Activated CD8-positive, alpha-beta T cell treated with anti-CD3 and anti-CD28 coated beads for 36 hours (primary cell): ENCODE measurements at regions of chr2 and their contacts with region 1.

Region 1: GRCh38 chr2:69643602-69644505 is at the start of gene AAK1:
- DNase-seq: peak; percentile 91
- ATAC-seq: peak; percentile 58
- H3K4me3 Mint-ChIP-seq: peak within 1 kb of the TSS; percentile 85
- H3K27ac Mint-ChIP-seq: peak within 1 kb of the TSS; percentile 96
- H3K4me1 Mint-ChIP-seq: peaks cover 50% of the 10 kb centered on the region
- H3K27me3 Mint-ChIP-seq: no peaks in the 10 kb centered on the region
- CTCF ChIP-seq: no peak
- total RNA-seq, gene AAK1: 114 to 115 TPM

Region 2: GRCh38 chr2:69253033-69253535 is 390.8 kb before region 1 on chr2:
- CTCF ChIA-PET with region 1: no interaction called
- POLR2A ChIA-PET with region 1: no interaction called
- intact Hi-C with region 1: no loop called
- DNase-seq: no peak
- ATAC-seq: no peak
- H3K4me3 Mint-ChIP-seq: no peak overlapping the region
- H3K27ac Mint-ChIP-seq: no peak overlapping the region
- H3K4me1 Mint-ChIP-seq: no peaks in the 10 kb centered on the region
- H3K27me3 Mint-ChIP-seq: peaks cover 28% of the 10 kb centered on the region
- CTCF ChIP-seq: no peak

Region 3: DNA sequence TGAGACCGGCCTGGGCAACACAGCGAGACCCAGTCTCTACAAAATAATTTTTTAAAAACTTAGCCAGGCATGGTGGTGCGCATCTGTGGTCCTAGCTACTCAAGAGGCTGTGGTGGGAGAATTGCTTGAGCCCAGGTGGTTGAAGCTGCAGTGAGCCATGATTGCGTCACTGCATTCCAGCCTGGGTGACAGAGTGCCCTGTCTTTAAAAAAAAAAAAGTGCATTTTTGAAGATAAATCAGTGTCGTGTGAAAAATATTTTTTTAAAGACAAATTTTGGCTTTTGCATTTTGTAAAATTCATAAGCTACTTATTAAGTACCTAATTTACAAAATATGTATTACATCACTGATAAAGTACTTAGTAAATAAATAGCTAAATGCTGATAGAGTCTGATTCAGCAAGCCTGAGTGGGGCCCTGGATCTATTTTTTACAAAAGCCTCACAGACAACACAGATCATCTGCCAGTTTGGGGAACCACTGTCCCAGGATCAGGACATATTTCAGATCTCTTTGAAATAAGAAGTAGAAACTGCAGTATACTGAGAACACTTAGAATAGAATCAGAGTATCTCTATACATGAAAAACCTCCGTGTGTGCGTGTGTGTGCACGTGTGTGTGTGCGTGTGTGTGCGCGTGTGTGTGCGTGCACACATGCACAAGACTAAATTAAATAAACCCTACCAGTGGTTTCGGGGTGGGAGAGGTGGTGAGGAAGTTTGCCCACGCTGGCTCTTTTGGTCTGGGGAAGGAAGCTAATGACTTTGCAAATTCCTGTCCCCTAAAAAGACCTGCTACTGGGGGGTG is 61.9 kb before region 1 on chr2:
- CTCF ChIA-PET with region 1: interaction called, 4 read pairs
- POLR2A ChIA-PET with region 1: interaction called, 5 read pairs
- intact Hi-C with region 1: loop called (anchors 5 kb)
- DNase-seq: peak; percentile 55
- ATAC-seq: peak; percentile 24
- H3K4me3 Mint-ChIP-seq: peak overlapping the region; percentile 66
- H3K27ac Mint-ChIP-seq: peak overlapping the region; percentile 88
- H3K4me1 Mint-ChIP-seq: peaks cover 89% of the 10 kb centered on the region
- H3K27me3 Mint-ChIP-seq: no peaks in the 10 kb centered on the region
- CTCF ChIP-seq: no peak

Region 4: DNA sequence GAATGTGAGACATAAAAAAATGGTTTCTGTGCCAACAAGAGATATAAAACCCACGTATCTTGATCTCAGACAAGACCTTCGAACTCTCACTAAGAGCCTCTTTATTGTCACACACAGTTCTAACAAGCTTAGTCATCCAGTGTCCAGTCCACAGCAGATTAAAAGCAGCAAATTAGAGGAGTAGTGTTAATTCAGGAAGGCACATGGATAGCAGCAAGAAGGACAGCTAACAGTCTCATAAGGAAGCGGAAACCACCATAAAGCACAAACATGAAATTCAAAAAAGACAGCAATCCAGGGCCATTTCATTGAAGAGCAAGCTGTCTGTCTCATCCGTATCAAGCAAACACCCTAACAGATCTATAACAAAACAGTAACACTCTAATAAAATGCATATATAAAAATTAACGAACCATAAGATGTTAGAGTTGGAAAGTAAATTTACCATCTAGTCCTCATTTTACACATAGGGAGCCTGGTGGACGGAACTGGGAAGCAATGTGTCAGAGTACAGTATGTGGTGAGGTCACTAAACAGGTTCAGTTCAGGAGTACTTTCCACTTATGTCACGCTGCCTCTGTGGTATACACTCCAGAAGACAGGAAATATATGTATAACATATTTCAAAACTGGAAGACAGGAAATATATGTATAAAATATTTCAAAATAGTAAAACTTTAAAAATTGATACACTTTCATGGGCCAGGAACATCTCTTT is 18.6 kb before region 1 on chr2:
- CTCF ChIA-PET with region 1: interaction called, 40 read pairs
- POLR2A ChIA-PET with region 1: interaction called, 21 read pairs
- intact Hi-C with region 1: no loop called
- DNase-seq: peak; percentile 37
- ATAC-seq: peak; percentile 21
- H3K4me3 Mint-ChIP-seq: no peak overlapping the region
- H3K27ac Mint-ChIP-seq: no peak overlapping the region
- H3K4me1 Mint-ChIP-seq: peaks cover 16% of the 10 kb centered on the region
- H3K27me3 Mint-ChIP-seq: no peaks in the 10 kb centered on the region
- CTCF ChIP-seq: no peak

Region 5: DNA sequence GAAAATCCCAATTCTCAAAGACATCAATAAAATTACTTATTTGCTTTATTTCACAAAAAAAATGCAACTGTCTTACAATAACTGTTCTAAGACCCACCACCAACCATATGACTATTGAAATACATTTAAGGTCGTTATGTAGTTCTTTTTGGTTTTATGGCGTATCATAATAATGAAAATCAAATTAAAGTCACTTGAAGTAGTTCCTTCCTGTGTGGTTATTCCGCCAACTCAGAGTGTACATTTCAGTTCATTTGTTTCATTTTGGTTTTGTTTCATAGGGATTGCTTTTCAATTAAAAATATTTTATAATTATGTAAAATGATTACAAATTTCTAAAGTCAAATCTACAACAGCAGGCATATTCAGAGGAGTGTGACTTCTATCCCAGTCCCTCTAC is 45.6 kb after region 1 on chr2:
- CTCF ChIA-PET with region 1: interaction called, 3 read pairs
- POLR2A ChIA-PET with region 1: interaction called, 6 read pairs
- intact Hi-C with region 1: loop called (anchors 2 kb)
- DNase-seq: no peak
- ATAC-seq: no peak
- H3K4me3 Mint-ChIP-seq: no peak overlapping the region
- H3K27ac Mint-ChIP-seq: peak overlapping the region; percentile 62
- H3K4me1 Mint-ChIP-seq: peaks cover 69% of the 10 kb centered on the region
- H3K27me3 Mint-ChIP-seq: no peaks in the 10 kb centered on the region
- CTCF ChIP-seq: no peak

Region 6: GRCh38 chr2:69945441-69945840 is 301.6 kb after region 1 on chr2:
- CTCF ChIA-PET with region 1: no interaction called
- POLR2A ChIA-PET with region 1: no interaction called
- intact Hi-C with region 1: no loop called
- DNase-seq: no peak
- ATAC-seq: no peak
- H3K4me3 Mint-ChIP-seq: no peak overlapping the region
- H3K27ac Mint-ChIP-seq: peak overlapping the region; percentile 33
- H3K4me1 Mint-ChIP-seq: peaks cover 37% of the 10 kb centered on the region
- H3K27me3 Mint-ChIP-seq: no peaks in the 10 kb centered on the region
- CTCF ChIP-seq: no peak